ENCODE measurements at regions of chr1 and their contacts with region 1.

Region 1: DNA sequence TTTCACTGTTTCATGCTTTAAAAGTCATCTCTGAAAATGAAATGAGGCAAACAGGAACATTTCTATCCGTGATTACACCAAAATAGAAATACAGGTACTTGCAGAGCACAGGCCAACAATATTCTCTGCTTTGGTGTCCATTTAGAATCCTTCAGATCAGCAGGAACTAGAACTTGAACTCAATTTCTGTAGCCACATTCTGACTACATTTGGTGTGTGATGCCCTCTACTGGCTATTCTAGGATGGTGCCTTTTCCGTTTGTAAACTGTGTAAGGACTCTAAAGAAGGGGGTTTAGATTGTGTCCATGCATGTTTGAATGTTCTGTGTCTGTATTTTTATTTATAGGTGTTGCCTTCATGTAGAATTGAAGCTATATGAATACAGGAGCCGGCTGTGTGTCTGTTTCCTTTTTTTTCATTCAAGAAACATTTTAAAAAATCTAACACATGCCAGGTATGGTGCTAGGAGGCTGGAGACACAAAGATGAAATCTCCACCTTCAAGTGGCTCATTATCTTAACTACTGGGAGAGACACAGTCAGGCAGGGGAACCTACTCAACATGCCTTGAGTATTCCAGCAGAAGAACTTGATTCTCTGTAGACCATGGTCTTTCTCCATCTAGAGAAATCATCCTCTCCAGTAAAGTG is 7.6 kb upstream of the ZNF326 start:
- DNase-seq: peak; percentile 81
- H3K4me3 Mint-ChIP-seq: no peak overlapping the region
- H3K27ac Mint-ChIP-seq: no peak overlapping the region
- H3K4me1 Mint-ChIP-seq: peaks cover 12% of the 10 kb centered on the region
- H3K27me3 Mint-ChIP-seq: no peaks in the 10 kb centered on the region
- CTCF ChIP-seq: peak; percentile 84

Region 2: GRCh38 chr1:89632657-89633247 is 354.5 kb before region 1 on chr1 and contains the start of gene LRRC8C:
- CTCF ChIA-PET with region 1: interaction called, 6 read pairs
- POLR2A ChIA-PET with region 1: interaction called, 3 read pairs
- intact Hi-C with region 1: loop called (anchors 5 kb)
- DNase-seq: peak; percentile 59
- H3K4me3 Mint-ChIP-seq: peak within 1 kb of the TSS; percentile 85
- H3K27ac Mint-ChIP-seq: peak within 1 kb of the TSS; percentile 57
- H3K4me1 Mint-ChIP-seq: peaks cover 18% of the 10 kb centered on the region
- H3K27me3 Mint-ChIP-seq: no peaks in the 10 kb centered on the region
- CTCF ChIP-seq: peak; percentile 40
- total RNA-seq, gene LRRC8C: 4.4 TPM in 2 replicates

Region 3: GRCh38 chr1:89804642-89805237 is 182.6 kb before region 1 on chr1:
- CTCF ChIA-PET with region 1: interaction called, 39 read pairs
- POLR2A ChIA-PET with region 1: interaction called, 6 read pairs
- intact Hi-C with region 1: loop called (anchors 1 kb)
- DNase-seq: peak; percentile 85
- H3K4me3 Mint-ChIP-seq: no peak overlapping the region
- H3K27ac Mint-ChIP-seq: no peak overlapping the region
- H3K4me1 Mint-ChIP-seq: no peaks in the 10 kb centered on the region
- H3K27me3 Mint-ChIP-seq: no peaks in the 10 kb centered on the region
- CTCF ChIP-seq: peak; percentile 83

Region 4: GRCh38 chr1:89826594-89826993 is 160.7 kb before region 1 on chr1:
- CTCF ChIA-PET with region 1: interaction called, 12 read pairs
- POLR2A ChIA-PET with region 1: interaction called, 11 read pairs
- intact Hi-C with region 1: no loop called
- DNase-seq: peak; percentile 69
- H3K4me3 Mint-ChIP-seq: no peak overlapping the region
- H3K27ac Mint-ChIP-seq: no peak overlapping the region
- H3K4me1 Mint-ChIP-seq: peaks cover 32% of the 10 kb centered on the region
- H3K27me3 Mint-ChIP-seq: no peaks in the 10 kb centered on the region
- CTCF ChIP-seq: no peak

Region 5: GRCh38 chr1:89974701-89975470 is 12.4 kb before region 1 on chr1:
- CTCF ChIA-PET with region 1: interaction called, 29 read pairs
- POLR2A ChIA-PET with region 1: interaction called, 5 read pairs
- intact Hi-C with region 1: no loop called
- DNase-seq: peak; percentile 57
- H3K4me3 Mint-ChIP-seq: no peak overlapping the region
- H3K27ac Mint-ChIP-seq: peak overlapping the region; percentile 38
- H3K4me1 Mint-ChIP-seq: peaks cover 27% of the 10 kb centered on the region
- H3K27me3 Mint-ChIP-seq: no peaks in the 10 kb centered on the region
- CTCF ChIP-seq: no peak